ENCODE measurements at regions of chr20 and their contacts with region 1.

Region 1: GRCh38 chr20:25294459-25295385 is 46.8 kb downstream of the PYGB start:
- DNase-seq: peak; percentile 75
- ATAC-seq: peak; percentile 95
- H3K4me3 ChIP-seq: no peak overlapping the region
- H3K4me3 Mint-ChIP-seq: no peak overlapping the region
- H3K27ac ChIP-seq: no peak overlapping the region
- H3K27ac Mint-ChIP-seq: no peak overlapping the region
- H3K4me1 ChIP-seq: peaks cover 0 to 18% of the 10 kb centered on the region in 2 donors
- H3K4me1 Mint-ChIP-seq: peaks cover 11% of the 10 kb centered on the region
- H3K27me3 ChIP-seq: no peaks in the 10 kb centered on the region
- H3K27me3 Mint-ChIP-seq: no peaks in the 10 kb centered on the region
- CTCF ChIP-seq: peak; percentile 73

Region 2: DNA sequence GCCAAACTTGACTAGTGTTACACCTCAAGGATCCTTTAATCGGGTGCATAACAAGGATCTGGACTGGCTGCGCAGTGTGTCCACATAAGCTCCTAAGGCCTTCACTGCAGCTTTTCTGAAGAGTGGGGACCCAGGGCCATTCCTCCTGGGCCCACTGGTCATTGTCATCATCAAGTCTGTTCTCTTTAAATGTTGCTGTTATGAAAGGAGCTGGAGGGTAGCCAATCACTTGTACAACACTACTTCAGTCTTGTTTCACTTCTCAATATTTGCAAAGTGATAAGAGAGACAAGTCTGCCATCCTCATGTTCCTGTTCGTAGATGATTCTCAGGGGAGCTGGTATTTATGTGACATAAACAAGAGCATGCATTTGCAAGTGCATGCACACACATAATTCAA is 675.5 kb before region 1 on chr20:
- CTCF ChIA-PET with region 1: no interaction called
- POLR2A ChIA-PET with region 1: no interaction called
- intact Hi-C with region 1: no loop called
- DNase-seq: peak; percentile 21
- ATAC-seq: peak; percentile 82
- H3K4me3 ChIP-seq: no peak overlapping the region
- H3K4me3 Mint-ChIP-seq: no peak overlapping the region
- H3K27ac ChIP-seq: no peak overlapping the region
- H3K27ac Mint-ChIP-seq: peak overlapping the region; percentile 46
- H3K4me1 ChIP-seq: peaks cover 0 to 6% of the 10 kb centered on the region in 2 donors
- H3K4me1 Mint-ChIP-seq: peaks cover 9% of the 10 kb centered on the region
- H3K27me3 ChIP-seq: no peaks in the 10 kb centered on the region
- H3K27me3 Mint-ChIP-seq: no peaks in the 10 kb centered on the region
- CTCF ChIP-seq: no peak

Region 3: DNA sequence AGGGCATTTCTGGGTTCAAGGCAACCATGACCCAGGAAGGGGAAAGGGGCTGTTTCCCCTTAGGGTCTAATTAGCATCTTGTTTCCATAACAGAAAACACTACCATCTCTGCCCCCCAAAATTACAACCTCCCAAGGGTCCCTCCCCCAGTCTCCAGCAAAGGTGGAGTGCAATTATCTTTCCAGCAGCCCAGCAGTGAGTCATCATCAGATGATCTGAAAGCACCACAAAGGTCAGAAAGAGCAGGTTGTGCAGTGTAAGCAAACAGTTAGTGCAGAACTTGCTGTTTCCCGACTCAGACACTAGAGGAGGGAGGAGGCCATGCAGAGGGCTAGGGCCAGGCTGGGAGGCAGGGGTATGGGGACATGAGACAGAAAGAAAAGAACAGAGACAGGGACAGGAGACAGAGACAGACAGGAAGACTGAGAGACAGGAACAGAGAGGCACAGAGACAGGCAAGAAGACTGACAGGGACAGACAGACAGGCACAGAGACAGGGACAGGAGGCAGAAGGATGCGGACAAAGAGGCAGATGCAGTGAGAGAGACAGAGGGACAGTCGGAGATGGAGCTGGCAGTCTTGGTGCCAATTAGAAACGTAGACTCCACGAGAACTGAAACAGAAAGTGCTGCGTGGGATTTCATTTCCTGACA is 15.7 kb after region 1 on chr20:
- CTCF ChIA-PET with region 1: interaction called, 12 read pairs
- POLR2A ChIA-PET with region 1: no interaction called
- intact Hi-C with region 1: no loop called
- DNase-seq: no peak
- ATAC-seq: peak; percentile 90
- H3K4me3 ChIP-seq: peak overlapping the region in 4 of 5 experiments; percentile 0 to 16 (median 4)
- H3K4me3 Mint-ChIP-seq: peak overlapping the region; percentile 70
- H3K27ac ChIP-seq: peak overlapping the region in 1 of 2 donors; percentile 16
- H3K27ac Mint-ChIP-seq: peak overlapping the region; percentile 82
- H3K4me1 ChIP-seq: peaks cover 10 to 19% of the 10 kb centered on the region in 2 donors
- H3K4me1 Mint-ChIP-seq: peaks cover 24% of the 10 kb centered on the region
- H3K27me3 ChIP-seq: no peaks in the 10 kb centered on the region
- H3K27me3 Mint-ChIP-seq: no peaks in the 10 kb centered on the region
- CTCF ChIP-seq: no peak

Region 4: GRCh38 chr20:25318471-25319240 is 23.9 kb after region 1 on chr20:
- CTCF ChIA-PET with region 1: interaction called, 11 read pairs
- POLR2A ChIA-PET with region 1: no interaction called
- intact Hi-C with region 1: no loop called
- DNase-seq: peak; percentile 71
- ATAC-seq: peak; percentile 91
- H3K4me3 ChIP-seq: peak overlapping the region in 1 of 5 experiments; percentile 2
- H3K4me3 Mint-ChIP-seq: peak overlapping the region; percentile 67
- H3K27ac ChIP-seq: peak overlapping the region; percentile 23 to 70
- H3K27ac Mint-ChIP-seq: peak overlapping the region; percentile 93
- H3K4me1 ChIP-seq: peaks cover 17 to 29% of the 10 kb centered on the region in 2 donors
- H3K4me1 Mint-ChIP-seq: peaks cover 34% of the 10 kb centered on the region
- H3K27me3 ChIP-seq: no peaks in the 10 kb centered on the region
- H3K27me3 Mint-ChIP-seq: no peaks in the 10 kb centered on the region
- CTCF ChIP-seq: no peak

Region 5: DNA sequence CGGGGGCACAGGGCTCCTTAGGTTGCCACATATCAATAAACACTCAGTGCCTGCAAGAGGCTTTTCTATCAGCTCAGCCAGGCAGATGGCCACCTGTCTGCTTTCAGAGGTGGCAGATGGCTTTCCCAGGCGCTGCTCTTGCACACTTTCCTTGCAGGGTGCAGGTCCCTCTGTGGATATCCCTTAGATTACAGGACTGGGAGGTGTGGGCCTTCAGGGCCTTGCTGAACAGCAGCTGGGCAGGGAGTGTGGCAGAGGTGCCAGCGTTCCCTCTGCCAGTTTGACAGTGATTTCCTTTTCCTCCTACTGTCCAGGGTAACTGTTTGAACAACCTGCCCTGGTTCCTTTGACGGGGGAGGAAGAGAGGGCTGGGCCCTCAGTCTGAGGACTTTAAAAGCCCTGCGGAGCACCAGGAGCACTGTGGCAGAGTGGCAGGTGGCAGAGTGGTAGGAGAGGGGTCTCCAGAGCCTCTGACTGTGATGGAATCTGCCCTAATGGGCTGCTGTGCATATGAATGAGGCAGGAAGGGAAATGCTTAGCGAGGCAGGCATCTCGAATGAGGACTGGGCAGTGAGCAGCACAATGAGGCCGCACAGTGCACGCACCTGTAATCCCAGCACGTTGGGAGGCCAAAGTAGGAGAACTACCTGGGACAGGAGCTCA is 61.7 kb after region 1 on chr20:
- CTCF ChIA-PET with region 1: no interaction called
- POLR2A ChIA-PET with region 1: no interaction called
- intact Hi-C with region 1: no loop called
- DNase-seq: no peak
- ATAC-seq: no peak
- H3K4me3 ChIP-seq: no peak overlapping the region
- H3K4me3 Mint-ChIP-seq: no peak overlapping the region
- H3K27ac ChIP-seq: no peak overlapping the region
- H3K27ac Mint-ChIP-seq: no peak overlapping the region
- H3K4me1 ChIP-seq: peaks cover 16 to 23% of the 10 kb centered on the region in 2 donors
- H3K4me1 Mint-ChIP-seq: peaks cover 36% of the 10 kb centered on the region
- H3K27me3 ChIP-seq: no peaks in the 10 kb centered on the region
- H3K27me3 Mint-ChIP-seq: no peaks in the 10 kb centered on the region
- CTCF ChIP-seq: no peak